Left colon (tissue), 2 donors: ENCODE measurements at regions of chr6 and their contacts with region 1.

Region 1: DNA sequence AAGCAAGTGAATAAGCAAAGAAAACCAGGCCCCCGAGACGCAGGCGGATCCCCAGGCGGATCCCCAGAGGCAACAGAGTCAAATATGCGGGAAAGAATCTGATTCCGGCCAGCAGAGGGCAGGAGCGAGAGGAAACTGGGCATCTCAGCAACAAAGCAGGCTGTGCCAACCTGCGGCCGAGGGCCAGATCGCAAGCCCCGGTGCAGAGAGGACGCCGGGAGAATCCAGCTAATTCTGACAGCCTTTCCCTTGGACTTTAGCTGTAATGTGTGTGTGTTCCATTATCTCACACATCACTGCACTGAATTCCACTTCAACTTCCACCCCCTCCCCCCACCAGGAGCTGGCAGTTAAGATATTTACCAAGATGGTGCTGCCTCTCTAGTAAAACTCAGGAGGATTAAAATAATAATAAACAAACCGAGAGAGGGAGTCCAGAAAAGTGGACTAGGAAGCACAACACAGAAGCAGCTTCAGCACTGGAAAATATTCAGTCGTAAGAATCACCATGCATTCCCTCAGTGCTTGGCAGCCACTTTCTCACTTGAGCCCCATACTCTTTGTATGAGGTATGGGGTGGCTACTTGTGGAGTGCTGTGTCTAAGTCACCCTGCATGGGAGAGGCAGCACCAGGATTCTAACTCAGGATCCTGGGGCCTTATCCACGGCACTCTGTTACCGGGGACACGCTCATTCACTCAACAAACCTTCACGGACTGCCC is 66.2 kb upstream of the SNX9 start:
- DNase-seq: peak; percentile 80 to 93
- ATAC-seq: peak; percentile 90

Region 2: GRCh38 chr6:157830354-157831017 is 73.6 kb after region 1 on chr6:
- intact Hi-C with region 1: no loop called
- DNase-seq: no peak
- ATAC-seq: no peak

Region 3: DNA sequence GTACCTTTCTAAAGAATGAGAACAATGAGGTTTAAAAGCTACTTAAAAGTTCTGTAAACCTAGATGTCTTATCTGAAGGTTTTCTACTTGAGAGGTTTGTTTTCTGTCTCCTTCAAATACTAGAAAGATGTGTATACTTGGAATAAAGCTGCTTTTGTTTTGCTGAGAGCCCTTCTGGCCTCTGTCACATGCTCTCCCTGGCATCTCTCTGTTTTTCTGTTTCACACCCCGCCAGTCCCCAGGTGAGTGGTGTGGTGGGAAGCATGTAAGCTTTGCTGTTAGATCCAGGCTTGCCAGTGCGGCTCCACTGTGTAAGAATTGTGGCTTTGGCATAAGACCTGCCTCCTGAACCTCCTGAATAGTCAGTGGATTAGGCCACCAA is 123.0 kb after region 1 on chr6:
- intact Hi-C with region 1: loop called in 1 of 2 experiments (anchors 5 kb)
- DNase-seq: no peak
- ATAC-seq: no peak

Region 4: GRCh38 chr6:157898169-157898568 is 141.3 kb after region 1 on chr6:
- intact Hi-C with region 1: no loop called
- DNase-seq: no peak
- ATAC-seq: no peak